HEK293 (cell line): ENCODE measurements at regions of chr12 and their contacts with region 1.

Region 1: GRCh38 chr12:109428037-109428629 is 49.0 kb downstream of the KCTD10 start:
- H3K4me3 ChIP-seq: no peak overlapping the region
- H3K27ac ChIP-seq: no peak overlapping the region
- H3K4me1 ChIP-seq: no peaks in the 10 kb centered on the region
- CTCF ChIP-seq: peak; percentile 74; the same call in 1 of the 2 replicates

Region 2: GRCh38 chr12:109385339-109386067 is 42.6 kb before region 1 on chr12:
- CTCF ChIA-PET with region 1: interaction called, 11 read pairs
- POLR2A ChIA-PET with region 1: no interaction called
- H3K4me3 ChIP-seq: no peak overlapping the region
- H3K27ac ChIP-seq: no peak overlapping the region
- H3K4me1 ChIP-seq: no peaks in the 10 kb centered on the region
- CTCF ChIP-seq: peak; percentile 65

Region 3: GRCh38 chr12:109455706-109456105 is 27.6 kb after region 1 on chr12:
- CTCF ChIA-PET with region 1: interaction called, 15 read pairs
- POLR2A ChIA-PET with region 1: no interaction called
- H3K4me3 ChIP-seq: no peak overlapping the region
- H3K27ac ChIP-seq: no peak overlapping the region
- H3K4me1 ChIP-seq: peaks cover 3% of the 10 kb centered on the region; the same call in 1 of the 2 replicates
- CTCF ChIP-seq: no peak

Region 4: GRCh38 chr12:109467978-109468682 is 40.0 kb after region 1 on chr12:
- CTCF ChIA-PET with region 1: interaction called, 38 read pairs
- POLR2A ChIA-PET with region 1: no interaction called
- H3K4me3 ChIP-seq: no peak overlapping the region
- H3K27ac ChIP-seq: no peak overlapping the region
- H3K4me1 ChIP-seq: peaks cover 9% of the 10 kb centered on the region
- CTCF ChIP-seq: no peak

Region 5: DNA sequence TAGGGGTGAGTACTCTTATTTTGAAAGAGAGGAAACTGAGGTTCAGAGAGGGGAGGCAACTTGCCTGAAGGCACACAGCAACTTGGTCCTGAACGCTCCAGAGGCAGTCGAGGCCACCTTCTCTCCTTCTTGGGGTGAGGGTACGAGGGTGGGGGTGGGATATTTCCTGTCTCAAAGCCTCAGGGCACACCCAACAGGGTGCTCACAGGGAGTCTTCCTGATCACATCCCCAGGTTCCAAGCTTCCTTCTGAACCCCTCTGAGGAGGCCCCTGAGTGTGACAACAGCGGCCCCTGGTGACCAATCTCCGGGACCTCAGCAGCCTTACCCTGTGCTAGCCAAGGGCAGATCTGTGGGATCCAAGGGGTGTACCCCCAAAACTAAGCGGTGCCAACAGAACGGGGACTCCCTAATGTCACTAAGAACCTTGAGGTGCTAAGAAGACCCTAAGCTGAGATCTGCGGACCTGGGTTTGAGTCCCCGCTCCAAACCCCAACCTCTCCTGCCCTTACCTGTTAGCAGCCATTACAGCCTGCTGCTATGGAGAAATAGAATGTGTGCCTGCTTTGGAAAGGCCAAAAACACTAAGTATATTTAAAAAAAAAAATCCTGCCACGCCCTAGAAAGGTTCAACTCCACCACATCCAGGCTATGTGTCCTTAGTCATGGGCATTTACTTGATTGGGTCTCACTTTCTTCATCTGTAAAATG is 347.2 kb after region 1 on chr12:
- CTCF ChIA-PET with region 1: interaction called, 12 read pairs
- POLR2A ChIA-PET with region 1: no interaction called
- H3K4me3 ChIP-seq: no peak overlapping the region
- H3K27ac ChIP-seq: no peak overlapping the region
- H3K4me1 ChIP-seq: no peaks in the 10 kb centered on the region
- CTCF ChIP-seq: peak; percentile 60